ENCODE measurements at regions of chr20 and their contacts with region 1.

Region 1: DNA sequence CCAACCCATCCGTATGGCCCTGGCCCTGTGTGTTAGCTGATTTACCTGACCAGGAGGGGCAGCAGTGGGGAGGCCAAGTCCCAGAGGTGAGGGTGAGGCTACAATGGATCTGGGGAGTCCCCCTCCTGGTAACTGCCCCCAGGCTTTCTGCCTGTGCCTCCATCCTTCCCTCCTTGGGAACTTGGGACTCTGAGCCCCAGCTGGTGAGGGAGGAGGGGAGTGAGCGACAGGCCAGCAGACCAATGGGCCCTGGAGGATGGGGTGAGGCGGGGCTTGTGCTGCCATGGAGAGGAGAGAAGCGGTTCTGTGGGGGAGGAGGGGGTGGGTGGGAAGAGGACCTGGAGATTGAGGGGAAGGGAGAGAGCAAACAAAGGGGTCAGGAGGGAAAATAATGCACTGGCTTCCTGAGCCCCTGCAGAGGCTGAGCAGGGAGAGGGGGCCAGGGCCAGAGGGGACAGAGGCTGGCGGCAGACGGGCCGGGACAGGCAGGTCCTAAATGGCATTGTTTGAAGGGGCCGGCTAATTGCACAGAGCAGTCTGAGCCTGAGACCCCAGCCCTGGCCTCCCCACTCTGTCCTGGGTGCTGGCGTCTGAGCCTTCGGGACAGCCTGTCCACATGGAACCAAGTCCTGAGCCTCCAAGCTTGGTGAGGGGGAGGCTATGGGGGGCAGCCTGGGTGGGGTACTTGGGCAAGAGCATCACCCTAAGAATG is 17.5 kb downstream of the DNMT3B start:
- DNase-seq: no peak
- H3K4me3 Mint-ChIP-seq: no peak overlapping the region
- H3K27ac Mint-ChIP-seq: no peak overlapping the region
- H3K4me1 Mint-ChIP-seq: peaks cover 17% of the 10 kb centered on the region
- H3K27me3 Mint-ChIP-seq: no peaks in the 10 kb centered on the region
- CTCF ChIP-seq: no peak

Region 2: DNA sequence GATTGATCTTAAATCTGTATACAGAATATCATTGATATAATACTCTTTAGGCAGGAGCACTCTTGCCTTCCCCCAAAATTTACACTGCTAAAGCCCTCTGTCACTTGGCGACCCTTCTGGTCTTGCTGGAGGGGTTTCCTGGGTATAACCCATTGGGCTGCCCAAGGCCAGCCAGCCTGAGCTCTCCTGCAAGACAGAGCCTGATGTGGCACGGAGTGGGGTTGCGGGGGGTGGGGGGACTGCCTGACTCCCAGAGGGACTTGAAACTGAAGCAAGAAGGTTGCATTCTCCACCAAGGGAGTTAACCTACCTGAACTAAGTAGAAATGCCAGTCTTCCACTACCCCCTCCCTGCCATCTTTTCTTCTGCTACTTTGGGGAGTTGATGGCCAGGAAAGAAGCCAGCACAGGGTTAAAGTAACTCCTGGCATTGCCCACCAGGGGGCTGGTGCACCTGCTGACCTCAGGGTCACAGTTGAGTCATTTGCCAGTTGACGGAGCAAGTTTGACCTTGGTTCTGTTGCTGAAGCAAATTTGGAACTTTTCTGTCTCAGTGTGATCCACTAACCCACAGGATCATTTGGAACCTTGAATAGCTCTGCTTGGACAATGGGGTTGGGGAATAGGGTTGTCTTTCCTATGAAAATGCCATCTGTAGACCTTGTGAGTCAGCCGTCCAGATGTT is 342.1 kb before region 1 on chr20:
- CTCF ChIA-PET with region 1: no interaction called
- POLR2A ChIA-PET with region 1: no interaction called
- intact Hi-C with region 1: no loop called
- DNase-seq: peak; percentile 28
- H3K4me3 Mint-ChIP-seq: no peak overlapping the region
- H3K27ac Mint-ChIP-seq: no peak overlapping the region
- H3K4me1 Mint-ChIP-seq: no peaks in the 10 kb centered on the region
- H3K27me3 Mint-ChIP-seq: no peaks in the 10 kb centered on the region
- CTCF ChIP-seq: peak; percentile 24

Region 3: GRCh38 chr20:32521780-32522525 is 257.7 kb before region 1 on chr20:
- CTCF ChIA-PET with region 1: interaction called, 17 read pairs
- POLR2A ChIA-PET with region 1: no interaction called
- intact Hi-C with region 1: loop called (anchors 5 kb)
- DNase-seq: peak; percentile 55
- H3K4me3 Mint-ChIP-seq: no peak overlapping the region
- H3K27ac Mint-ChIP-seq: no peak overlapping the region
- H3K4me1 Mint-ChIP-seq: peaks cover 5% of the 10 kb centered on the region
- H3K27me3 Mint-ChIP-seq: no peaks in the 10 kb centered on the region
- CTCF ChIP-seq: peak; percentile 87

Region 4: GRCh38 chr20:32674362-32674789 is 105.3 kb before region 1 on chr20:
- CTCF ChIA-PET with region 1: interaction called, 202 read pairs
- POLR2A ChIA-PET with region 1: interaction called, 3 read pairs
- intact Hi-C with region 1: loop called (anchors 1 kb)
- DNase-seq: peak; percentile 72
- H3K4me3 Mint-ChIP-seq: no peak overlapping the region
- H3K27ac Mint-ChIP-seq: no peak overlapping the region
- H3K4me1 Mint-ChIP-seq: peaks cover 5% of the 10 kb centered on the region
- H3K27me3 Mint-ChIP-seq: no peaks in the 10 kb centered on the region
- CTCF ChIP-seq: peak; percentile 87

Region 5: DNA sequence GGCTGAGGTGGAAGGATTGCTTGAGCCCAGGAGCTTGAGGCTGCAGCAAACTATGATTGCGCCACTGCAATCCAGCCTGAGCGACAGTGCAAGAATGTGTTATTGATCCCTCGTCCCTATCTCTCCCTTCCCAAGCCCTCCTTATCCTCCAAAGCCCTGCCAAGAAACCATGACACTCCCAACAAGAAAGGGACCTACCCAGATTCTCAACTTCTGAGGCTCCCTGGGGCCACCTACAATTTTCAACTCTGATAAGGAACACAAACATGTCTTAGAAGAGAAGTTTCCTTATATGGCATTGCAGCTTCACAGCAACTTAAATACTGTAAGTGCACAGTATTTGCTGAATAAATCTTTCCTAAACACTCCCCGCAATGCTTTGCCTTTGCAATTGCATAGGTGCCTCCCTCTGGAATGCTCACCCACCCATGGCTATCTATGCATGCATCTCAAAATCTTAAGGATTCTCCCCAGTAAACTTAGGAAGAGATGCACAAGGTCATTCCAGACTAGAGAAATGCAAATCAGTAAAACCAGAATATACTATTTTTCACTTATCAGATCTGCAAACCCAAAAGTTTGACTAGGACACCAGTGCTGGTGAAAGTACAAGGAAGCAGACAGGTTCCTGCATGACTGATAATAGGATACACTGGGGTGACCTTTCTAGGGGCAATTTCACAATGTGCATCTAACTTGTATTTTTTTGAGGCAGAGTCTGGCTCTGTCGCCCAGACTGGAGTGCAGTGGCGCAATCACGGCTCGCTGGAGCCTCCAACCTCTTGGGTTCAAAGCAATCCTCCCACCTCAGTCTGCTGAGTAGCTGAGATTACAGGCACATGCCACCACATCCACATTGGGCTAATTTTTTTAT is 48.0 kb before region 1 on chr20:
- CTCF ChIA-PET with region 1: interaction called, 11 read pairs
- POLR2A ChIA-PET with region 1: no interaction called
- intact Hi-C with region 1: no loop called
- DNase-seq: peak; percentile 66
- H3K4me3 Mint-ChIP-seq: no peak overlapping the region
- H3K27ac Mint-ChIP-seq: peak overlapping the region; percentile 61
- H3K4me1 Mint-ChIP-seq: peaks cover 23% of the 10 kb centered on the region
- H3K27me3 Mint-ChIP-seq: no peaks in the 10 kb centered on the region
- CTCF ChIP-seq: no peak

Region 6: GRCh38 chr20:32762149-32762753 is 17.4 kb before region 1 on chr20 and contains the start of gene DNMT3B:
- CTCF ChIA-PET with region 1: interaction called, 29 read pairs
- POLR2A ChIA-PET with region 1: interaction called, 8 read pairs
- intact Hi-C with region 1: no loop called
- DNase-seq: peak; percentile 65
- H3K4me3 Mint-ChIP-seq: peak within 1 kb of the TSS; percentile 85
- H3K27ac Mint-ChIP-seq: peak within 1 kb of the TSS; percentile 63
- H3K4me1 Mint-ChIP-seq: no peaks in the 10 kb centered on the region
- H3K27me3 Mint-ChIP-seq: no peaks in the 10 kb centered on the region
- CTCF ChIP-seq: peak; percentile 6
- total RNA-seq, gene DNMT3B: 1.3 and 2.0 TPM in 2 replicates